Spleen (tissue), 13 donors: ENCODE measurements at regions of chr1 and their contacts with region 1.

Region 1: DNA sequence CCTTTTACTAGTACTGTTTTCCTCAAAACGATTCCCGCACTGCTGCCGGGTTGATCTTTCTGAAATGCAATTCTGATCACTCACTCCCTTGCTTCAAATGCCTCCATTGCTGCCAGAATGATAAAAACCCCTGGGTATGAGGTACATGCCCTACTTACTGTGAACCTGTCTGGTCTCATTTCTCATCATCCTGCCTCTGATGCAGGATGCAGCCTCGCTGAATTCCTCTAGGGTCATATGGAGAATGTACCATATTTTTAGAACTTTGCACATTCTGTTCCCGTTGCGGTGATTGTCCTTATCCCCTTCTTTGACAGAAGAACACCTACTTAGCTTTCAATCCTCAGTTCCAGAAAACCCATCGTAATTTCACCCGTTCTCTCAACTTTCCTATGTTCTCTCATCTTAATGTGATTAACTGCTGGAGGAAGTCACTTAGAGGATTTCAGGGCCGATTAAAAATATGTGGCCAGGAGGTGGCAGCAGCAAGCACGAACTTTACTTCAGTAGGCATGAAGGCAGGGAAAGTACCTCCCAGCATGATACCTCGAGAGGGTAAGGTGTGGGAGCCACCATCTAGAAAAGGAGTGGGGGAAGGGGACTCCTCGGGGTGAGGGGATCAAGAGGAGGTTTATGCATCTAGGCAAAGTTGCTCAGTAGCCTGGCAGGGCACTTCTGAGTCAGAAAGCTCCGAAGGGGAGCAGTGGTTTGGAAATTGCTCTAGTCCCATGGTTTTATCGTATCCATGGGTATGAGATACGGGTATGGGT is 361.5 kb upstream of the ZP4 start:
- DNase-seq: no peak
- H3K4me3 ChIP-seq: no peak overlapping the region
- H3K27ac ChIP-seq: no peak overlapping the region
- H3K4me1 ChIP-seq: no peaks in the 10 kb centered on the region
- H3K27me3 ChIP-seq: no peaks in the 10 kb centered on the region
- CTCF ChIP-seq: peak in 7 of 11 experiments; percentile 25 to 52 (median 40)
- POLR2A ChIP-seq: no peak

Region 2: DNA sequence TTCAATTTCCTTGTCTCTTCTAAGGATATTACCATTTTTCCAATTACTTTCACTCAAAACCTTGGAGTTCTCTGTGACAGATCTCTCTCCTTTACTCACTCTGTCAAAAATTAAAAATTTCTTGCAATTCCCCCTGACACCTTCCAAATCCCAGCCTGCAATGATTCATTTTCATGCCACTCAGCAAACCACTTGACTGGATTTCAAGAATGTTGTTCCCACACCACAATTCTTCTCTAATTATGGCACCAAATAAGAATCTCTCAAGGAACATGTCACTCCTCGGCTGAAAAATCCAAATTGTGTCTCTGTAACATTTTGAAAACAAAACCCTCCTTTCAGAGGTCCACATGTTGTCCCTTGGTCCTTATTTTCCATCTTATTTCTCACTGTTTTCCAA is 77.5 kb after region 1 on chr1:
- intact Hi-C with region 1: no loop called
- DNase-seq: no peak
- H3K4me3 ChIP-seq: no peak overlapping the region
- H3K27ac ChIP-seq: no peak overlapping the region
- H3K4me1 ChIP-seq: no peaks in the 10 kb centered on the region
- H3K27me3 ChIP-seq: no peaks in the 10 kb centered on the region
- CTCF ChIP-seq: no peak
- POLR2A ChIP-seq: no peak

Region 3: GRCh38 chr1:238954865-238955264 is 702.6 kb after region 1 on chr1:
- intact Hi-C with region 1: loop called (anchors 5 kb)
- DNase-seq: no peak
- H3K4me3 ChIP-seq: no peak overlapping the region
- H3K27ac ChIP-seq: no peak overlapping the region
- H3K4me1 ChIP-seq: no peaks in the 10 kb centered on the region
- H3K27me3 ChIP-seq: no peaks in the 10 kb centered on the region
- CTCF ChIP-seq: no peak
- POLR2A ChIP-seq: no peak